Mammary epithelial cell (primary cell): ENCODE measurements at regions of chr15 and their contacts with region 1.

Region 1: GRCh38 chr15:89243691-89244471 is at the start of gene FANCI:
- DNase-seq: peak; percentile 94
- H3K4me3 ChIP-seq: peak within 1 kb of the TSS; percentile 79 to 93 (median 85)
- H3K27ac ChIP-seq: peak within 1 kb of the TSS; percentile 73
- H3K4me1 ChIP-seq: peaks cover 14% of the 10 kb centered on the region
- H3K27me3 ChIP-seq: no peaks in the 10 kb centered on the region
- CTCF ChIP-seq: peak in 1 of 2 donors; percentile 61
- total RNA-seq, gene FANCI: 17.3 to 65.8 TPM

Region 2: DNA sequence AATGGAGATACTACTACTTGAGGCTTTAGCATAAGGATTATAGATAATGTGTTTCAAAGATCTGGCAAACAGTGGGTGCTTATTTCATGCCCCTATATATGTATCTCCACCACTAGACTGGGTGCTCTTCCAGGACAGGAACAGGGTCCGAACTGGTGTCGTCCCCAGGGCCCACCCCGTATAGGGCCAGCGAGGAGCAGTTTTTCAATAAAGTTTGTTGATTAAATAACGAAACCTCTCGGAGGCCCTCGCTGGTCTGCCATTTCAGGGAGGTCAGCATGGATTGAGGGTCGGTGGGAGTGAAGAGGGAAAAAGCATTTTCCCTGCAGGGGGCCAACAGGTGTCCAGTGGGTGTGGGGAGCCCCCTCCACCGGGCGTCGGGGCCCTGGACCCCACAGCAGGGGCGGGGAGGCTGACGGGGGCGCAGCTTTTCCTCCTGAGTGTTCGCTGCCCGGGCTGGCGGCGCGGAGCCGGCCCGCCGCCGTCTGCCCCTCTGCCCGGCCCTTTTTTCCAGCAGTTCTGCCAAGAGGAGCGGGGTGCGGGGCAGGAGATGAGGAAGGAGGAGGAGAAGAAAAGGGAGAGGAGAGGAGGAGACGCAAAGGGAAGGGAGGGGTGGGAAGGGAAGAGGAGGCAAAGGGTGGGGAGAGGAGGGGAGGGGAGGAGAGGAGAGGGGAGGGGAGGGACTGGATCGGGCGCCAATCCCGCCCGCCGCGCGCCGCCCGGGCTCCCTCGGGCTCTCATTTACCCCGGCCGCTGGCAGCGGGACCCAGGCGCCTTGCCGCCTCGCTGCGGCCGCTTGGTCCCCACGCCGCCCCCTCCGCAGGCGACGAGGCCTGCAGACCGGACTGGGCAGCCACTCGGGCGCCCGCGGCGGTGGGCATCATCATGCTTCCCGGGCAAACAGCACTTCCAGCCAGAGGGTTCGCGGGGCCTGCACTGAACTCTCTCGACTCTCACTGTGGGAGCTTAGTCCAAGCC is 538.8 kb before region 1 on chr15:
- CTCF ChIA-PET with region 1: no interaction called
- dilution Hi-C with region 1: no loop called
- in situ Hi-C with region 1: no loop called
- intact Hi-C with region 1: no loop called
- DNase-seq: no peak
- H3K4me3 ChIP-seq: peak overlapping the region in 1 of 3 experiments; percentile 24
- H3K27ac ChIP-seq: no peak overlapping the region
- H3K4me1 ChIP-seq: peaks cover 18% of the 10 kb centered on the region
- H3K27me3 ChIP-seq: no peaks in the 10 kb centered on the region
- CTCF ChIP-seq: no peak

Region 3: DNA sequence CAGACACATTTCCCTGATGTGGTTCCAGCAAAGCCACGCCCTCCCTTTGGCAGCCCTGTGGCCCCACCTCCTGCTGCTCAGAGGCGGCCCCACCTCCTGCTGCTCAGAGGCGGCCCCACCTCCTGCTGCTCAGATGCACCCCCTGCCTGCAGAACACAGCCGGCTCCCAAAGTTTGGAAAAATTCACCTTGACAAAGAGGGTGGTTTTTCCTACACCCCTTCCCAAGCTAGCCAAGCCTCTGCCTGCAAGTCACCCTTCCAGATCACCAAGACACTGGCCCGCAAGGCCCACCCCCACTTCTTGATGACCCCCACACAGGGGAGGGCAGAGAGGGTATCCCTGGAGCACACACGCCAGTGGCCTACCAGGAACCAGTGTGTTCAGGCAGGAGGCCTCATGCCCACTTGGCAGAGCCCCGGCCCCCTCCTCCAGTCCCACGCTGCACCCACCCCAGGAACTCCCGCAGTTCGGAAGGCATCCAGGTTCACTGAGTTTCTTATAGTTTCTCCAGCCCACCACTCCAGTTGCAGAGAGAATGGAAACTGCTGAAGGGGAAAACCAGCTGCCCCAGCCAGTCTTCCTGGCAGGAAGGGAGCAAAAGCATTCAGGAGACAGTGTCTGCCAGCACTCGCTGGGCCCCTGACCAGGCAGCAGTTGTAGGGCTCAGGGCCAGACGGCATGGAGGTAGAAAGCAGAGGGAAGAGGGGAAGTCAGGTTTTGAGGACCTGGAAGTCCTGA is 346.3 kb before region 1 on chr15:
- CTCF ChIA-PET with region 1: no interaction called
- dilution Hi-C with region 1: no loop called
- in situ Hi-C with region 1: no loop called
- intact Hi-C with region 1: loop called (anchors 5 kb)
- DNase-seq: peak; percentile 81
- H3K4me3 ChIP-seq: no peak overlapping the region
- H3K27ac ChIP-seq: no peak overlapping the region
- H3K4me1 ChIP-seq: peaks cover 18% of the 10 kb centered on the region
- H3K27me3 ChIP-seq: no peaks in the 10 kb centered on the region
- CTCF ChIP-seq: peak; percentile 38 to 74

Region 4: DNA sequence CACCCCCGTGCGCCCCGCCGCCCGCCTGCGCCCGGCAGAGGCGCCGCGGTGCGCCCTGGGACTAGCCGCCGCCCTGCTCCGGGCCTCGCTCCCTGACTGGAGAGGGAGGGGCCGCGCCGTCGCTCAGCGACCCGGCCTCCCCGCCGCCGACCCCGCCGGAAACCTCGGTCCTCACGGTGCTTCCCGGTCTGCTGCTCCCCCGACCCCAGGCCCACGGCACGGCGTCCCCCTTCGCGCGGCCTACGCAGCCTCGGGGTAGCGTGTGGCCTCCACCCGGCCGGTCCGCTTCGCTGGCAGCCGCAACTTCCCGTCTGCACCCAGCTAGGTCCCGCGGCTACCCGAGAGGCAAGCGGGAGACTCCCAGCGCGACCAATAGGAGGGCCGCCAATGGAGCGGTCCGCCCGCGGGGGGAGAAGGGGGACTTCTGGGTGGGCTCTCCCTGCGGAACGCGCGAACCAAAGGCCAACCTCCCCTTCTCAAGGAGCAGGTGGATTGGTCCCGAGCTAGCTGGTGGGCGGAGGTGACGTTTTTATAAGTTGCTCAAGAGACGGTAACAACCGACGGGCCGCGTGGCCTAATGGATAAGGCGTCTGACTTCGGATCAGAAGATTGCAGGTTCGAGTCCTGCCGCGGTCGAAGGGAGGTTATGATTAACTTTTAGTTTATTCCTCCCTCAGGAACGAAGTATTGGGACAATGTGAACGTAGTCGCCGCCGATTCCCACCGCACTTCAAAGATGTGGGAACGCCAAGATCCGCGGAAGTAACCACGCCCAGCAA is 90.8 kb after region 1 on chr15 and contains the start of gene POLG:
- CTCF ChIA-PET with region 1: no interaction called
- dilution Hi-C with region 1: no loop called
- in situ Hi-C with region 1: no loop called
- intact Hi-C with region 1: loop called (anchors 1 kb)
- DNase-seq: peak; percentile 99
- H3K4me3 ChIP-seq: peak within 1 kb of the TSS; percentile 57 to 86 (median 70)
- H3K27ac ChIP-seq: peak within 1 kb of the TSS; percentile 74
- H3K4me1 ChIP-seq: peaks cover 38% of the 10 kb centered on the region
- H3K27me3 ChIP-seq: no peaks in the 10 kb centered on the region
- CTCF ChIP-seq: no peak
- total RNA-seq, gene POLG: 58.3 to 66.7 TPM